Activated B cell treated with CpG ODN at 0.5 μM for 24 hours (primary cell): ENCODE measurements at regions of chr1 and their contacts with region 1.

Region 1: GRCh38 chr1:160539990-160540858 is 17.2 kb upstream of the SLAMF6 start:
- DNase-seq: no peak
- ATAC-seq: peak; percentile 95
- H3K4me3 Mint-ChIP-seq: peak overlapping the region; percentile 56
- H3K27ac Mint-ChIP-seq: peak overlapping the region; percentile 96
- H3K4me1 Mint-ChIP-seq: peaks cover 58% of the 10 kb centered on the region
- H3K27me3 Mint-ChIP-seq: no peaks in the 10 kb centered on the region
- CTCF ChIP-seq: no peak

Region 2: DNA sequence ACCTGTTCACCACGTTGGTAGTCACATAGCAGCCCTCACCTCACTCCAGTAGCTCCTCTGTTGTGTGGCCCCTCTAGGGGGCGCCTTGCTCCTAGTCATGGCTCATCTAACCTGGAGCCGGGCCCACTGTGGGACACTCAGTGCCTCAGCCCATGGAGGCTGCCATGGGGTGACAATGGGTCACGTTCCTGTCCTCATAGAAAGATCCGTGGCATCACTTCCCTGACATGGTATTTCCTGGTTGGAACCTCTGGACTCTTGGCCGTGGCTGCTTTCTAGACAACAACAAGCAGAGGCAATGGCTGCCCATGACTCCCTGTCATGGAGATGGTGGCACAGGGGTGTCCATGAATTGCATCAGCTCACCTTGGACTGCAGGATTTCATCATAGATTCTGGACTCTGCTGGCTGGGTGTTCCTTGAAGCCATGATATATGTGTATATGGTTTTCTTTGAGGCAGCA is 10.4 kb after region 1 on chr1:
- CTCF ChIA-PET with region 1: interaction called, 6 read pairs
- POLR2A ChIA-PET with region 1: interaction called, 24 read pairs
- intact Hi-C with region 1: loop called (anchors 1 kb)
- DNase-seq: no peak
- ATAC-seq: no peak
- H3K4me3 Mint-ChIP-seq: no peak overlapping the region
- H3K27ac Mint-ChIP-seq: peak overlapping the region; percentile 90
- H3K4me1 Mint-ChIP-seq: peaks cover 86% of the 10 kb centered on the region
- H3K27me3 Mint-ChIP-seq: no peaks in the 10 kb centered on the region
- CTCF ChIP-seq: no peak

Region 3: GRCh38 chr1:160558660-160559380 is 18.6 kb after region 1 on chr1:
- CTCF ChIA-PET with region 1: interaction called, 6 read pairs
- POLR2A ChIA-PET with region 1: no interaction called
- intact Hi-C with region 1: loop called (anchors 2 kb)
- DNase-seq: no peak
- ATAC-seq: no peak
- H3K4me3 Mint-ChIP-seq: no peak overlapping the region
- H3K27ac Mint-ChIP-seq: peak overlapping the region; percentile 24
- H3K4me1 Mint-ChIP-seq: peaks cover 49% of the 10 kb centered on the region
- H3K27me3 Mint-ChIP-seq: no peaks in the 10 kb centered on the region
- CTCF ChIP-seq: no peak

Region 4: GRCh38 chr1:160575112-160575664 is 35.0 kb after region 1 on chr1:
- CTCF ChIA-PET with region 1: interaction called, 7 read pairs
- POLR2A ChIA-PET with region 1: interaction called, 10 read pairs
- intact Hi-C with region 1: loop called (anchors 2 kb)
- DNase-seq: peak; percentile 28
- ATAC-seq: peak; percentile 78
- H3K4me3 Mint-ChIP-seq: peak overlapping the region; percentile 91
- H3K27ac Mint-ChIP-seq: peak overlapping the region; percentile 91
- H3K4me1 Mint-ChIP-seq: peaks cover 95% of the 10 kb centered on the region
- H3K27me3 Mint-ChIP-seq: no peaks in the 10 kb centered on the region
- CTCF ChIP-seq: no peak

Region 5: DNA sequence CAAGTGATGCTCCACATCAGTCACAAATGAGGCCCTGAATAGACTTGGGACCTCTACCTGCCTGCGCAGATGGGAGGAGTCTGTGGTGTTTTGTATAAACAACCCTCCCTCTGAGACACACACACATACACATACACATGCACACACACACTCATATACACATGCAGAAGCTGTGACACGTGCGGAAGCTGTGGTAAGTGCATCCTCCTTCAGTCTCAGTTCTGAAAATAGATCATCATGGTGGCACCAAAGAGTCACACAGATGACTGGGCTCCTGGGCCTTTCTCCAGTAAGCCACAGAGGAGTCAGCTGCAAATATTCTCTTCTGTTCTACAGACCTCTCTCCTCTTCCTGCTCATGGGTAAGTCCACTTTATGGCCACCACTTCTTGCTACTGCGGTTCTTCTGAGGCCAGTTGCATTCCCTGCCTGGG is 255.7 kb after region 1 on chr1 and contains the start of gene LY9:
- CTCF ChIA-PET with region 1: no interaction called
- POLR2A ChIA-PET with region 1: no interaction called
- intact Hi-C with region 1: no loop called
- DNase-seq: peak; percentile 46
- ATAC-seq: peak; percentile 87
- H3K4me3 Mint-ChIP-seq: peak within 1 kb of the TSS; percentile 95
- H3K27ac Mint-ChIP-seq: peak within 1 kb of the TSS; percentile 99
- H3K4me1 Mint-ChIP-seq: peaks cover 81% of the 10 kb centered on the region
- H3K27me3 Mint-ChIP-seq: no peaks in the 10 kb centered on the region
- CTCF ChIP-seq: no peak
- total RNA-seq, gene LY9: 63.6 and 71.6 TPM in 2 replicates

Region 6: DNA sequence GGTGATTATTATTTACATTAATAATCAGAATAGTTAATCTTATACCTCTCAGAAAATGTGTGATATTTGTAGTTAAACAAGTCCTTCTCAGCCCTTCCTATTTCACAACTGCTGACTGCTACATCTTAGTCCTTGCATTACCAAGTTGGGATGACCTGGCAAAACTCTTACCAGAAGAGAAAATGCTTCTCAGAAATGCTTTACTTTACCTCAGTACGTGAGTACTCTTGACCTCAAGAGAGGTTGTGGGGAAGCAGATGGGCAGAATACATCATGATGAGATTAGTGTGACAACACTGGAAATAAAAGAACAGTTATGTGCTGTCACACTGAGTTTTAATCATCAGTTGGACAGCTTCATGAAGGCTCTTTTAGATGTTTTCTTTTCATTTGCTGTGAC is 811.3 kb after region 1 on chr1:
- CTCF ChIA-PET with region 1: no interaction called
- POLR2A ChIA-PET with region 1: no interaction called
- intact Hi-C with region 1: no loop called
- DNase-seq: no peak
- ATAC-seq: no peak
- H3K4me3 Mint-ChIP-seq: no peak overlapping the region
- H3K27ac Mint-ChIP-seq: no peak overlapping the region
- H3K4me1 Mint-ChIP-seq: peaks cover 7% of the 10 kb centered on the region
- H3K27me3 Mint-ChIP-seq: no peaks in the 10 kb centered on the region
- CTCF ChIP-seq: no peak